Activated CD8-positive, alpha-beta memory T cell treated with anti-CD3 and anti-CD28 coated beads, Interleukin-2, amount 10 ng/mL, durations not matched to agents 7 days and 5 days (primary cell): ENCODE measurements at regions of chr6 and their contacts with region 1.

Region 1: GRCh38 chr6:33840048-33840926 is 36.5 kb upstream of the MLN start:
- DNase-seq: peak; percentile 86
- ATAC-seq: peak; percentile 98
- H3K4me3 Mint-ChIP-seq: no peak overlapping the region
- H3K27ac Mint-ChIP-seq: peak overlapping the region; percentile 72
- H3K4me1 Mint-ChIP-seq: peaks cover 29% of the 10 kb centered on the region
- H3K27me3 Mint-ChIP-seq: peaks cover 13% of the 10 kb centered on the region

Region 2: GRCh38 chr6:33822575-33823395 is 17.5 kb before region 1 on chr6:
- CTCF ChIA-PET with region 1: no interaction called
- DNase-seq: no peak
- ATAC-seq: no peak
- H3K4me3 Mint-ChIP-seq: no peak overlapping the region
- H3K27ac Mint-ChIP-seq: no peak overlapping the region
- H3K4me1 Mint-ChIP-seq: peaks cover 13% of the 10 kb centered on the region
- H3K27me3 Mint-ChIP-seq: peaks cover 12% of the 10 kb centered on the region

Region 3: DNA sequence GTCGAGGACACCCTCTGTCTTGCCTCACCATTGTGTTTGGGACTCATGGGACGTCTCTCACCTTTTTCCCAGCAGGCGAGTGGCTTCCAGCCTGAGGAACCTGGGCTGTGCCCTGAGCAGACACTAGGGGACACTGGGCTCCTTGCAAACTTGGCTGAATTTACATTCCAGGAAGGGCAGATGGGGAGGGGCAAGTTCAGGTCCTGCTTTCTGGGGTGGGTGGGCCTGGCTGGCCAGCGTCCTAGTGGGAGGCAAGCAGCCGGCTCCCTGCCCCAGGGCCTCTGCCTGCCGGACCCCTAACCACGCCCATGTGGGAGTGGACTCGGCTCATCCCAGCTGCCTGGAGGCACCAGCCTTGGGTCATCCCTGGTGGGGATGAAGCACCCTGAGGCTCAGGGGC is 11.7 kb after region 1 on chr6:
- CTCF ChIA-PET with region 1: interaction called, 21 read pairs
- DNase-seq: peak; percentile 53
- ATAC-seq: no peak
- H3K4me3 Mint-ChIP-seq: no peak overlapping the region
- H3K27ac Mint-ChIP-seq: no peak overlapping the region
- H3K4me1 Mint-ChIP-seq: peaks cover 17% of the 10 kb centered on the region
- H3K27me3 Mint-ChIP-seq: peaks cover 46% of the 10 kb centered on the region